ENCODE measurements at regions of chr1 and their contacts with region 1.

Region 1: GRCh38 chr1:222455188-222455879 is 92.6 kb downstream of the HHIPL2 start:
- DNase-seq: peak; percentile 93
- ATAC-seq: peak; percentile 98
- H3K4me3 ChIP-seq: no peak overlapping the region; the same call in 1 of the 2 replicates
- H3K27ac ChIP-seq: peak overlapping the region; percentile 74
- H3K4me1 ChIP-seq: peaks cover 9% of the 10 kb centered on the region
- H3K27me3 ChIP-seq: no peaks in the 10 kb centered on the region
- CTCF ChIP-seq: peak; percentile 96
- POLR2A ChIP-seq: peak; percentile 56; the same call in 1 of the 2 replicates
- RAD21 ChIP-seq: peak; percentile 99

Region 2: GRCh38 chr1:221263831-221264767 is 1191.2 kb before region 1 on chr1:
- CTCF ChIA-PET with region 1: no interaction called
- POLR2A ChIA-PET with region 1: no interaction called
- dilution Hi-C with region 1: no loop called
- in situ Hi-C with region 1: loop called (anchors 25 kb)
- intact Hi-C with region 1: loop called (anchors 1 kb)
- DNase-seq: peak; percentile 89
- ATAC-seq: peak; percentile 81
- H3K4me3 ChIP-seq: no peak overlapping the region
- H3K27ac ChIP-seq: no peak overlapping the region
- H3K4me1 ChIP-seq: peaks cover 2% of the 10 kb centered on the region; the same call in 1 of the 2 replicates
- H3K27me3 ChIP-seq: no peaks in the 10 kb centered on the region
- CTCF ChIP-seq: peak; percentile 68
- POLR2A ChIP-seq: no peak
- RAD21 ChIP-seq: peak; percentile 77

Region 3: GRCh38 chr1:221543529-221544120 is 911.7 kb before region 1 on chr1:
- CTCF ChIA-PET with region 1: interaction called, 4 read pairs
- POLR2A ChIA-PET with region 1: no interaction called
- dilution Hi-C with region 1: no loop called
- in situ Hi-C with region 1: no loop called
- intact Hi-C with region 1: loop called (anchors 1 kb)
- DNase-seq: peak; percentile 54
- ATAC-seq: peak; percentile 60
- H3K4me3 ChIP-seq: no peak overlapping the region
- H3K27ac ChIP-seq: no peak overlapping the region
- H3K4me1 ChIP-seq: no peaks in the 10 kb centered on the region
- H3K27me3 ChIP-seq: no peaks in the 10 kb centered on the region
- CTCF ChIP-seq: peak; percentile 65
- POLR2A ChIP-seq: no peak
- RAD21 ChIP-seq: peak; percentile 64

Region 4: DNA sequence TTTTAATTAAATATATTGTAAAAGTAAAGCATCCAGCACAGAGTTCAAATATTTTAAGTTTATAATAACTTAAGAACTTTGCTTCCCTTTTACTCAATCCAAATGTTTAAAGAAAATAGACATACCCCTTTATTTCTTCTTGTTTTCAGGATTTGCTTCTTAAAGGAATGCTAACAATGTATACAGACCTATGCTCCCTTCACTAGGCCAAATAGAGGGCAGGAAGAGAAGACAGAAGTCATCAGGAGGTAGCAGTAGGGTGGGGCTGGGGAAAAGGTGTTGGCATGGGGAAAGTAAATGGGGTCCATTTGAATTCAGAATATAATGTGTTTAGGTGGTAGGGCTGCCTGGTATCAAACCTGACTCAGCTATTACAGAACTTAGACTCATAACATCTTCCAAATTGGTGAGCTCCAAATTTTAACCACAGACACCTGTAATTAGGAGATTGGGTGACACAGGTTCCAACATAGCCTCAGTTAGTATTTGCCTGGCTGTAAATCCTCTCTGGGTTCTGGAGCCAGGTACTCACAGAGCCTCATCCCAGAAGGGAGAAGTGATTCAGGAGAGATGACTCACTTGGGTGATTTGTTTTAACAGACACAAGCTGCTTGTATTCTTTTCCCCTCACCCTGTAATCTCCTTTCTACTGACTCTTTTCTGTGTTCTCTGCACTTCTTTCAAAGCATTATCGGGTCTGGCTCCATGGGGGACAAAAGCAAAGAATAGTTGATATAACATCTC is 653.4 kb before region 1 on chr1:
- CTCF ChIA-PET with region 1: no interaction called
- POLR2A ChIA-PET with region 1: no interaction called
- dilution Hi-C with region 1: no loop called
- in situ Hi-C with region 1: no loop called
- intact Hi-C with region 1: loop called (anchors 5 kb)
- DNase-seq: peak; percentile 89
- ATAC-seq: peak; percentile 84
- H3K4me3 ChIP-seq: no peak overlapping the region
- H3K27ac ChIP-seq: peak overlapping the region; percentile 70
- H3K4me1 ChIP-seq: peaks cover 14% of the 10 kb centered on the region
- H3K27me3 ChIP-seq: no peaks in the 10 kb centered on the region
- CTCF ChIP-seq: no peak
- POLR2A ChIP-seq: no peak
- RAD21 ChIP-seq: no peak

Region 5: GRCh38 chr1:222048094-222048595 is 407.2 kb before region 1 on chr1:
- CTCF ChIA-PET with region 1: no interaction called
- POLR2A ChIA-PET with region 1: no interaction called
- dilution Hi-C with region 1: no loop called
- in situ Hi-C with region 1: no loop called
- intact Hi-C with region 1: loop called (anchors 10 kb)
- DNase-seq: peak; percentile 74
- ATAC-seq: peak; percentile 59
- H3K4me3 ChIP-seq: no peak overlapping the region
- H3K27ac ChIP-seq: no peak overlapping the region
- H3K4me1 ChIP-seq: peaks cover 20% of the 10 kb centered on the region
- H3K27me3 ChIP-seq: no peaks in the 10 kb centered on the region; the same call in 1 of the 2 replicates
- CTCF ChIP-seq: no peak
- POLR2A ChIP-seq: no peak
- RAD21 ChIP-seq: no peak

Region 6: GRCh38 chr1:222283147-222283768 is 172.1 kb before region 1 on chr1:
- CTCF ChIA-PET with region 1: interaction called, 9 read pairs
- POLR2A ChIA-PET with region 1: no interaction called
- dilution Hi-C with region 1: no loop called
- in situ Hi-C with region 1: no loop called
- intact Hi-C with region 1: loop called (anchors 1 kb)
- DNase-seq: peak; percentile 99
- ATAC-seq: peak; percentile 91
- H3K4me3 ChIP-seq: no peak overlapping the region
- H3K27ac ChIP-seq: peak overlapping the region; percentile 94
- H3K4me1 ChIP-seq: peaks cover 19% of the 10 kb centered on the region
- H3K27me3 ChIP-seq: no peaks in the 10 kb centered on the region
- CTCF ChIP-seq: 0 out of 2 replicates have a peak, but pooled peaks have one; percentile 0
- POLR2A ChIP-seq: no peak
- RAD21 ChIP-seq: no peak